Activated B cell treated with CpG ODN at 0.5 μM for 24 hours (primary cell): ENCODE measurements at regions of chr17 and their contacts with region 1.

Region 1: GRCh38 chr17:39777534-39778365 is 40.0 kb downstream of the GRB7 start:
- DNase-seq: no peak
- ATAC-seq: peak; percentile 44
- H3K4me3 Mint-ChIP-seq: peak overlapping the region; percentile 88
- H3K27ac Mint-ChIP-seq: peak overlapping the region; percentile 96
- H3K4me1 Mint-ChIP-seq: peaks cover 93% of the 10 kb centered on the region
- H3K27me3 Mint-ChIP-seq: no peaks in the 10 kb centered on the region
- CTCF ChIP-seq: no peak

Region 2: GRCh38 chr17:39763046-39763820 is 14.5 kb before region 1 on chr17:
- CTCF ChIA-PET with region 1: no interaction called
- POLR2A ChIA-PET with region 1: interaction called, 308 read pairs
- intact Hi-C with region 1: no loop called
- DNase-seq: no peak
- ATAC-seq: no peak
- H3K4me3 Mint-ChIP-seq: no peak overlapping the region
- H3K27ac Mint-ChIP-seq: peak overlapping the region; percentile 55
- H3K4me1 Mint-ChIP-seq: peaks cover 83% of the 10 kb centered on the region
- H3K27me3 Mint-ChIP-seq: no peaks in the 10 kb centered on the region
- CTCF ChIP-seq: no peak

Region 3: GRCh38 chr17:39822051-39822451 is 44.3 kb after region 1 on chr17:
- CTCF ChIA-PET with region 1: interaction called, 3 read pairs
- POLR2A ChIA-PET with region 1: interaction called, 13 read pairs
- intact Hi-C with region 1: no loop called
- DNase-seq: no peak
- ATAC-seq: peak; percentile 70
- H3K4me3 Mint-ChIP-seq: peak overlapping the region; percentile 45
- H3K27ac Mint-ChIP-seq: peak overlapping the region; percentile 95
- H3K4me1 Mint-ChIP-seq: peaks cover 65% of the 10 kb centered on the region
- H3K27me3 Mint-ChIP-seq: no peaks in the 10 kb centered on the region
- CTCF ChIP-seq: no peak

Region 4: DNA sequence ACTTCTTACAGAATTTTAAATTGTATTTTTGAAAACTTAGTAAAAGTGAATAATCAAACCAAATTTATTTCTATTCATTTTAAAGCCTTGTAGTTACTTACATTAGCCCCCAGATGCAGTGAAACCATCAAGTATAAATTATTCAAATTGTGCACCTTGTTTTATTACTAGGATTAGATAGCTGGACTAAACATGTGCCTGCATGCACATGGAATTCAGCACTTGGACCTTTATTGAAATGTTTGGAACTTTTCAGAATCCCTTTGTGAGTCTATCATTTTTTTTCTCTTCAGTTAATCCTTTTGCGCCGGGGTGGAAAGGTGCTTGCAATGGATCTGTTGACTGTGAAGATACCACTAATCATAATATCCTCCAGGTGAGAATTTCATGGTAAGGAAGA is 95.0 kb after region 1 on chr17:
- CTCF ChIA-PET with region 1: no interaction called
- POLR2A ChIA-PET with region 1: no interaction called
- intact Hi-C with region 1: no loop called
- DNase-seq: no peak
- ATAC-seq: peak; percentile 45
- H3K4me3 Mint-ChIP-seq: peak overlapping the region; percentile 58
- H3K27ac Mint-ChIP-seq: peak overlapping the region; percentile 62
- H3K4me1 Mint-ChIP-seq: peaks cover 43% of the 10 kb centered on the region
- H3K27me3 Mint-ChIP-seq: no peaks in the 10 kb centered on the region
- CTCF ChIP-seq: no peak